CD4-positive, alpha-beta T cell (primary cell): ENCODE measurements at regions of chr1 and their contacts with region 1.

Region 1: DNA sequence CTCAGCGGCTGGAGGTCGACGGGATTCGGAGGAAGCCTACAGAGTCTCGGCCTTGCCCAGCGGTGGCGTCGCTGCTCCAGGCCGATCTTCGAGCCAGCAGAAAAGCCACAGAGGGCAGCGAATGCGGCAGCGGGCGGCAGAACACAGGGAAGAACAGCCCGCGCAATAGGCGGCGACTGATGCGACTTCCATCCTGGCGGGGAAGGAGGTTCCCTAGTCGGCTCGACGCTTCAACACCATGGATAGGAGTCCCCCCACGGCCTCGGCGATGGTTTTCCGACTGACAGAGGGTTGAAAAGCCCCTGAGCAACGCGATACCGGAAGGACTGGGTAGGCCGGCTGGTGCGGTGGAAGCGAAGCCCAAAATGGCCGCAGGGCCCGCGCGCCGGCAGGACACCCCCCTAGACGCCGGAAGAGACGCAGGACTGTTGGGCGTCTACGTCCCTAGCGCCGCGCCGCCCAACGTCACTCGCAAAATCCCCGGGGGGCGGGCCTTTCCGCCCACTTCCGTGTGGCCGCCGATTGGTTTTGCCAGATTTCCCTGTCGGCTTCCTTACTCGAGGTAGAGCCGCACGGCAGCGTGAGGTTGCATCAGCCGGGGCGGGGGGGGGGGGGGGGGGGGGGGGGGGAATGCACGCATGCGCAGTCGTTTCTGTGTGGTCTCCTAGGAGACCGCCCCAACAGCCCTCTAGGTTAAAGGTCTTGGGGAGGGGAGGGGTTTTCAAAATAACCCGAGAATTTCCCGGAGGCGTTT is at the start of gene PPP1R15B:
- DNase-seq: peak; percentile 95 to 99 (median 97)
- ATAC-seq: peak; percentile 89
- H3K4me3 ChIP-seq: peak within 1 kb of the TSS; percentile 98
- H3K4me3 Mint-ChIP-seq: peak within 1 kb of the TSS; percentile 100
- H3K27ac ChIP-seq: peak within 1 kb of the TSS; percentile 100
- H3K27ac Mint-ChIP-seq: peak within 1 kb of the TSS; percentile 100
- H3K4me1 ChIP-seq: peaks cover 11% of the 10 kb centered on the region
- H3K4me1 Mint-ChIP-seq: peaks cover 25% of the 10 kb centered on the region
- H3K27me3 ChIP-seq: no peaks in the 10 kb centered on the region
- H3K27me3 Mint-ChIP-seq: no peaks in the 10 kb centered on the region
- CTCF ChIP-seq: no peak
- total RNA-seq, gene PPP1R15B: 171 to 179 TPM

Region 2: DNA sequence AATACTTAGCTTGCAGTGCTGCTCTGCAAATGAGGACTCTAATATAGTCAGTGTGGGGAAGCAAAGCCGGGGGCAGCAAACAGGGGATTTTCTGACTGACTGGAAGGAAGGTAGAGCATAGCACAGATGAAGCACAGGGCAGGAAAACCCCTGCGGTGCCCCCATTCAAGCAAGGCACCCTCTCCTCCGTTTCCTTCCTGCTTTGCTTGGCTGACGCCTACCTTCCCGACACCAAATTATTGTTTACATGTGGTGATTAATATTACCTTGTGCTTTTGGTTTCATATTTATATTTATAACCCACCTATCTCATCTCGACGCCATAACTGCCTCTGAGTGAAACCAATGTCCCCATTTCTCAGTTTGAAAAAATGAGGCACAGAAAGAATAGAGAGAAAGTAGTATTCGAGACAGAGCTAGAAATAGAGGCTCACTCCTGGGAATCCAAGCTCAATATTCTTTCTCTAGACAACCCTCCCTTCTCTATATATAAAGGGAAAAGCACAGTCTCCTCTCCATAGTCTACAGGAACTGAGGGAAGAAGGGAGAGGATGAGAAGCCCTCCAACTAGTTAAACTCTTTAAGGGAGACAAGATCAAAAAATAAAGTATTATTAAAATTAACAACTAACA is 41.6 kb after region 1 on chr1:
- CTCF ChIA-PET with region 1: no interaction called
- POLR2A ChIA-PET with region 1: no interaction called
- intact Hi-C with region 1: loop called in 1 of 2 experiments (anchors 1 kb)
- DNase-seq: peak; percentile 40 to 93 (median 66)
- ATAC-seq: peak; percentile 98
- H3K4me3 ChIP-seq: no peak overlapping the region
- H3K4me3 Mint-ChIP-seq: peak overlapping the region; percentile 17
- H3K27ac ChIP-seq: peak overlapping the region; percentile 67 to 80
- H3K27ac Mint-ChIP-seq: peak overlapping the region; percentile 87
- H3K4me1 ChIP-seq: peaks cover 57% of the 10 kb centered on the region
- H3K4me1 Mint-ChIP-seq: peaks cover 43% of the 10 kb centered on the region
- H3K27me3 ChIP-seq: no peaks in the 10 kb centered on the region
- H3K27me3 Mint-ChIP-seq: no peaks in the 10 kb centered on the region
- CTCF ChIP-seq: no peak